Activated CD8-positive, alpha-beta T cell treated with anti-CD3 and anti-CD28 coated beads, Interleukin-2, amount 10 ng/mL, durations not matched to agents 7 days and 5 days (primary cell): ENCODE measurements at regions of chr11 and their contacts with region 1.

Region 1: DNA sequence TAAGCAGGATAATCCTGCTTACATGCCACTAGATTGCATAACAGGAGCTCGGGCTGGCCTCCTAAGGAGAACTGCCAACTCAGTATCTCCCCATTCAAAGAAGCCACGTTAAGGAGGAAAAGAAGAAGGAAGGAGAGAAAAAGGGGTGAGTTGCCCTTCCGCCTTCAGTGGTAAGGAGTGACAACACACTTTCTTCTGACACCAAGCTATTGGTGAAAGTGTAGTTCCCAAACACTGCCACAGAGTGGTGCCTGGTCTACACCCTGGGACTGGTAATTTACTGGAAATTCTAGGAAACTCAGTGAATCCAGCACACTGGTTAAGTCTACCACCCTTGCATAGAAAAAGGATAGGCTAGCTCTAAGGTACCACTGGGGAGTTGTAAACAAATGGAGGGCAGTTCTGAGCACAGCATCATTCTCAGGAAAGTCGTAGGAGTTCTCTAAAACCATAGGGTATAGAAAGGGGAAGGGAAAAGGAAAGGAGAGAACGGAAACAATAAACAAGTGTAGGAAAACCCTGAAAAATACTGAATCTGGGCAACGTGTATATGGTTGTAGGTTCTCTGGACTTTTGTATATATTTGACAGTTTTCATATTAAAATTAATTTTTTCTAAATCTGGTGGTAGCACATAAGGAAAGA is 58.2 kb downstream of the RRAS2 start:
- DNase-seq: peak; percentile 67
- ATAC-seq: peak; percentile 89
- H3K4me3 Mint-ChIP-seq: no peak overlapping the region
- H3K27ac Mint-ChIP-seq: no peak overlapping the region
- H3K4me1 Mint-ChIP-seq: peaks cover 36% of the 10 kb centered on the region
- H3K27me3 Mint-ChIP-seq: no peaks in the 10 kb centered on the region

Region 2: DNA sequence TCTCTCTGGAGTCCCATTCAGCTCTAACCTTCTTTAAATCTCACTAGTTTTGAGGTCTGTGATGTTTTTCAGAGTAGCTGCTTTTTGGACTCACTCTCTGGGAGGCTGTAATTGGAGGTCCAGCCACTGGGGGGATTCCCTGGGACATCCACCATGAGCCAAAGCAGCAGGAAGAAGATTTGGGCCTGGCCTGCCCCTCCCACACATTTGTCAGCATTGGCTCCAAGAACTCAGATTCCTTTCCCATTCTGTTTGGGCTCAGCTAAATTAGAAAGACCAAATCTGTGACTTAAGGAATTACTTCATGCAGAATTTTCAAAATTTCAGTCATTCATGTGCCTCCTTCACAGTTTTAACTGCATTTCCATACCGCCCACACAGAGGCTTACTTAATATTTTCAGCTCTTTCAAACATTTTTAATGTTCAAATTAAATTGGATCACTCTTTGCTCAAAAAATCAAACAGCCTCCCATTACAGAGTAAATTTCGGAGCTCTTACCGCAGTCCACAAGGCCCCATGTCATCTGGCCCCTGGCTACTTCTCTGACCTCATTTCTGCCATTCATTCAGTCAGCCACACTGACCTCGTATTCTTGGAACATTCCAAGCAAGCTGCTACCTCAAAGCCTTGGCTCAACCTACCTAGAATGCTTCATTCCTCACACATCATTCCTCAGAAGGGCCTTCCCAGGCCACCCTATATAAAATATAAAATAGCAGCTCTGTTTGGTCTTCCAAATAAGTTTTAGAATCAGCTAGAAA is 112.7 kb after region 1 on chr11:
- CTCF ChIA-PET with region 1: interaction called, 82 read pairs
- POLR2A ChIA-PET with region 1: no interaction called
- DNase-seq: peak; percentile 29
- ATAC-seq: no peak
- H3K4me3 Mint-ChIP-seq: no peak overlapping the region
- H3K27ac Mint-ChIP-seq: peak overlapping the region; percentile 65
- H3K4me1 Mint-ChIP-seq: peaks cover 84% of the 10 kb centered on the region
- H3K27me3 Mint-ChIP-seq: no peaks in the 10 kb centered on the region

Region 3: DNA sequence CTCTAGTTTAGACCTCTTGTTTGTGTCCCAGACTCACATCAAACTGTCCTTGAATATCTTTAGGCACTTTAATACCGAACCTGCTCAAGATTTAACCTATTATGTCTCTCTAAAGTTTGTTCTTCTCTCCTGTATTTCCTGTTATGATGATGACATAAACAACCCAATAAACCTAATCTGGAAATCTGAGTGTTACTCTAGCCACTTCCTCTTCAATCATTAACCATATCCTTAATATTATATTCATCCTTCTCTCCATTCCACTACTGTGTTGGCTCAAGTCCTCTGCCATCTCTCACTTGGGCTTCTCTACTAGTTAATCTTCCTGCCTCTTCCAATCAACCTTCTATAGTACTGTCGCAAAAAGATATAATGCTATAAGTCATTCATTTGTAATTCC is 162.8 kb after region 1 on chr11:
- CTCF ChIA-PET with region 1: interaction called, 12 read pairs
- POLR2A ChIA-PET with region 1: interaction called, 6 read pairs
- DNase-seq: no peak
- ATAC-seq: no peak
- H3K4me3 Mint-ChIP-seq: no peak overlapping the region
- H3K27ac Mint-ChIP-seq: no peak overlapping the region
- H3K4me1 Mint-ChIP-seq: no peaks in the 10 kb centered on the region
- H3K27me3 Mint-ChIP-seq: no peaks in the 10 kb centered on the region